Activated CD4-positive, alpha-beta T cell treated with anti-CD3 and anti-CD28 coated beads for 36 hours (primary cell): ENCODE measurements at regions of chr1 and their contacts with region 1.

Region 1: GRCh38 chr1:42639116-42639515 is 19.1 kb upstream of the PPIH start:
- DNase-seq: no peak
- ATAC-seq: no peak
- H3K4me3 Mint-ChIP-seq: no peak overlapping the region
- H3K27ac Mint-ChIP-seq: no peak overlapping the region
- H3K4me1 Mint-ChIP-seq: no peaks in the 10 kb centered on the region
- H3K27me3 Mint-ChIP-seq: no peaks in the 10 kb centered on the region

Region 2: DNA sequence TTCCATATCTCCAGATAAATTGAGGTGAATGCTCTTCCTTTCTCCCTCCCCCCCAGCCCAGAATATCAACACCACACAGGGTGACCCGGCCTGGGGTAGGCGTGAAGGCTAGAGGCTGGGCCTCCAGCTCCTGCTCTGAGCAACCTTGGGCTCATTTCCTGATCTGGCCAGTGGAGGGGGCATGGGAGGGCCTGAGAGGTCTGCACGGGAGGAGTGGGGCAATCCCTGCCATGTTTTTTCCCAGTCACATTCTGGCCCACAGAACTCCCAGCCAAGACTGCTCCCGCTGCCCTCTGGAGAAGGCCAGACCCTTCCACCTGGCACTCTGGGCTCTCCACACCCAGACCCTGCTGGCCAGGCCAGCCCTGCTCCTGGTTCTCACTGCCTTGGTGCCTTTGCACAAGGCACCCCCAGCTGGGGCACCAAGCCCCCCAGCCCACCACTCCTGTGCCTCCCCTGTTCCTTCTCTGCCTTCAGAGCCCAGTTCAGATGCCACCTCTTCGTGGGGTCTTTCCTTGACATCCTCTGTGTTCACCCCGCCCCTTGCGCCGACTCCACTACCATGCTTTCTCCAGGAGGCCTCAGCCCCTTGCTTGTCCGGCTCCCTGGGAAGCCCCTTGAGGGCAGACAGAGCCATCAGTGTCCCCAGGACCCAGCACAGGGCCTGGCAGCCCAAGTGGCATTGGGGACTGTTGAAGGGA is 97.2 kb after region 1 on chr1:
- CTCF ChIA-PET with region 1: interaction called, 4 read pairs
- POLR2A ChIA-PET with region 1: interaction called, 14 read pairs
- intact Hi-C with region 1: no loop called
- DNase-seq: peak; percentile 23
- ATAC-seq: peak; percentile 39
- H3K4me3 Mint-ChIP-seq: no peak overlapping the region
- H3K27ac Mint-ChIP-seq: no peak overlapping the region
- H3K4me1 Mint-ChIP-seq: peaks cover 7% of the 10 kb centered on the region
- H3K27me3 Mint-ChIP-seq: no peaks in the 10 kb centered on the region